Naive thymus-derived CD4-positive, alpha-beta T cell (primary cell): ENCODE measurements at regions of chr11 and their contacts with region 1.

Region 1: DNA sequence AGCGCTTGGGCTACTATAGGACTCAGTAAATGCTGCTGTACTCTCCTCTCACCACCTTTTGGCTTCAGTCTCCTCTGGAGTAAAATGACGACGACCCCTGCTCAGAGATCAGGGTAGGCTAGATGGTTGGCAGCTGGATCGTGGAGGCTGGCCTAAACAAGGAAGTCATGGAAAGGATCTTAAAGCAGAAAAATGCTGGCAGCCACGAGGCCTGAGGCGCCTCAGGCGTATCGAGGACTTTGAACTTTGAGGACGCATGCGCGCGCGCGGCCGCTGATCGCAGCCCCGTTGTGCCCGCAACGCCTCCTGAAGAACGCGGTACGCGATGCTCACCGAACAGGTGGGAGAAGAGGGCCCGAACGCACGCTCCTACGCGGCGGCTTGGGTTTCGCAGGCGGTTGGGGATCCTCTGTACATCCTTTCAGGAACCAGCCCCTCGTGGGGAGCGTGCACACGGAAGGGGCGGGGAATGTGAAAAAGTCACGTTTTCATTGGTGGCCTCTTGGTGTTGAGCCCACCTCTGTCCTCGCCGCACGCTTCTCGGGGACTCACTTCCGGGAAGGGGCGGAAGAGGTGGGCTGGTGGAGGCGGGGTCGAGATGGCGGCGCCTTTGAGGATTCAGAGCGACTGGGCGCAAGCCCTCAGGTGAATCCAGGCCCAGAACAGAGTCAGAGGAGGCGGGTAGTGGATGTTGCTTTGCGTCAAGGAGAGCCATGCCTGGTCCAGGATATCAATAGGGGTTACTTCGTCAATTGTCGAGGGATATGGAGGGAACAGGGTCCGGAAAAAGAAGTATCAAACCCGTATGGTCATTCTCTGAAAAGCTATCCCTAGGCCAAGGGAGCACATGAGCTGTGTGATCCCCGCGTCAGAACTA is at the starts of genes COA4 and PAAF1:
- DNase-seq: peak; percentile 72 to 95 (median 94)
- ATAC-seq: peak; percentile 99
- H3K4me3 ChIP-seq: peak within 1 kb of the TSS; percentile 94
- H3K4me3 Mint-ChIP-seq: peak within 1 kb of the TSS; percentile 94 to 98 (median 96)
- H3K27ac ChIP-seq: peak within 1 kb of the TSS; percentile 88
- H3K27ac Mint-ChIP-seq: peak within 1 kb of the TSS; percentile 92 to 100 (median 97)
- H3K4me1 ChIP-seq: peaks cover 17 to 19% of the 10 kb centered on the region in 2 donors
- H3K4me1 Mint-ChIP-seq: peaks cover 20 to 55% (median 43%) of the 10 kb centered on the region in 7 donors
- H3K27me3 ChIP-seq: no peaks in the 10 kb centered on the region
- H3K27me3 Mint-ChIP-seq: no peaks in the 10 kb centered on the region
- total RNA-seq, gene COA4: 29.1 to 75.0 (median 58.2) TPM
- total RNA-seq, gene PAAF1: 12.4 to 22.7 (median 20.3) TPM

Region 2: GRCh38 chr11:72871119-72871518 is 1005.5 kb before region 1 on chr11:
- CTCF ChIA-PET with region 1: no interaction called
- POLR2A ChIA-PET with region 1: no interaction called
- intact Hi-C with region 1: no loop called
- DNase-seq: no peak
- ATAC-seq: no peak
- H3K4me3 ChIP-seq: no peak overlapping the region
- H3K4me3 Mint-ChIP-seq: no peak overlapping the region
- H3K27ac ChIP-seq: no peak overlapping the region
- H3K27ac Mint-ChIP-seq: peak overlapping the region in 4 of 9 donors; percentile 9 to 51 (median 36)
- H3K4me1 ChIP-seq: peaks cover 0 to 11% of the 10 kb centered on the region in 2 donors
- H3K4me1 Mint-ChIP-seq: peaks cover 16 to 36% (median 26%) of the 10 kb centered on the region in 7 donors
- H3K27me3 ChIP-seq: no peaks in the 10 kb centered on the region
- H3K27me3 Mint-ChIP-seq: no peaks in the 10 kb centered on the region

Region 3: DNA sequence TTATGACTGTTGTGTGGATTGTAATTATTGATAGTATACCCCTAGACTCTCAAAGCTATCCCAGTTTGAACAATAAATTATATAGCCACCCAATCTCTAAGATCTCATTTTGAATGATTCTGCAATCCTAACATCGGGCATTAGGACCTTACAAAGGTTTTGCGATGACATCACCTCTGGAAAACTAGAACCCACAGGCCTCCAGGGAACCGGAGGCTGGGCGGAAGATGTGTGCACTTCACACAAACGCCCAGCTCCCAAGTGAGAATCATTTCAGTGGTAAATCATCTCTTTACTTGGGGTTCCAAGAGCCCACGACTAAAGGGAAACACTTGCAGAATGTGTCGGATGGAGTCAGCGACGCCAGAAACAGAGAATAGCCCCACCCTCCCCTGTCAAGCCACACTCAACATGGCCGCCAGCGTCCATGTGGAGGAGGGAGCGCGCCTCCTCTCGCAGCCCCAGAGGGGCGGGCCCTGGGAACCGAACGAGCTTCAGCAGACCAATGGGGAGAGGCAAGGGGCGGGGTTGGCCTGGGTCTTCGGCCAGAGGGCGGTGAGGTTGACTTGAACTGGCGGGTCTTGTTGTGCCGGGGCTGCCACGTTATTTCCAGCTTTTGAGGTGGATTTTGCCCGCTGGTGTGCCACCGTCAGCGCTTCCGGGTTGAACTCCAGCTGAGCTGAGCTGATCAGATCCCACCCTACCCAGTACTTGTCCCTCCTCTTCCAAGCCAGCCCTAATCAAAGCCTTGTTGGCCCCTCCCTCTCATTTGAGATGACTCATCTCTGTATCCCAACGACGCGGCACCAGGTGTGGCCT is 97.4 kb before region 1 on chr11:
- CTCF ChIA-PET with region 1: interaction called, 4 read pairs
- POLR2A ChIA-PET with region 1: interaction called, 7 read pairs
- intact Hi-C with region 1: loop called (anchors 1 kb)
- DNase-seq: peak; percentile 88 to 98 (median 97)
- ATAC-seq: peak; percentile 99
- H3K4me3 ChIP-seq: peak overlapping the region; percentile 58
- H3K4me3 Mint-ChIP-seq: peak overlapping the region; percentile 86 to 97 (median 94)
- H3K27ac ChIP-seq: peak overlapping the region; percentile 89
- H3K27ac Mint-ChIP-seq: peak overlapping the region; percentile 94 to 100 (median 100)
- H3K4me1 ChIP-seq: peaks cover 0 to 6% of the 10 kb centered on the region in 2 donors
- H3K4me1 Mint-ChIP-seq: peaks cover 2 to 18% (median 9%) of the 10 kb centered on the region in 7 donors
- H3K27me3 ChIP-seq: no peaks in the 10 kb centered on the region
- H3K27me3 Mint-ChIP-seq: peaks cover 0 to 6% (median 0%) of the 10 kb centered on the region in 5 donors

Region 4: GRCh38 chr11:73787643-73788537 is 88.8 kb before region 1 on chr11 and contains the start of gene MRPL48:
- CTCF ChIA-PET with region 1: no interaction called
- POLR2A ChIA-PET with region 1: interaction called, 3 read pairs
- intact Hi-C with region 1: loop called (anchors 1 kb)
- DNase-seq: peak; percentile 74 to 90 (median 86)
- ATAC-seq: peak; percentile 100
- H3K4me3 ChIP-seq: peak within 1 kb of the TSS; percentile 94
- H3K4me3 Mint-ChIP-seq: peak within 1 kb of the TSS; percentile 92 to 100 (median 98)
- H3K27ac ChIP-seq: peak within 1 kb of the TSS; percentile 81
- H3K27ac Mint-ChIP-seq: peak within 1 kb of the TSS; percentile 93 to 100 (median 99)
- H3K4me1 ChIP-seq: peaks cover 10 to 13% of the 10 kb centered on the region in 2 donors
- H3K4me1 Mint-ChIP-seq: peaks cover 7 to 43% (median 30%) of the 10 kb centered on the region in 7 donors
- H3K27me3 ChIP-seq: no peaks in the 10 kb centered on the region
- H3K27me3 Mint-ChIP-seq: no peaks in the 10 kb centered on the region
- total RNA-seq, gene MRPL48: 20.3 to 50.6 (median 25.5) TPM